ENCODE measurements at regions of chr4 and their contacts with region 1.

Region 1: DNA sequence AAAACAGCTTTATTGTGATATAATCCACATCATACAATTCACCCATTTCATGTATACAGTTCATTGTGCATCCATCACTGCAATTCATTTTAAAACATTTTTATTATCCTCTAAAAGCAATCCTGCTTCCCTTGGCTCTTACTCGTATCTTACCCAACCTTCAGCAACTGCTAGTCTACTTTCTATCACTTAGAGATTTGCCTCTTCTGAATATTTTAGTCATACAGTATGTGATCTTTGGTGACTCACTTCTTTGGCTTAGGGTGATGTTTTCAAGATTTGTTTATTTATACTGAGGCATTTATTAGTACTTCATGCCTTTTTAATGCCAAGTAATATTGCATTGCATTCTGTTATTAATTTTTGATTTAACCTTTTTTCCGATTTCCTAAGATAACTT is 15.0 kb upstream of the MSMO1 start:
- DNase-seq: no peak
- CTCF ChIP-seq: no peak

Region 2: DNA sequence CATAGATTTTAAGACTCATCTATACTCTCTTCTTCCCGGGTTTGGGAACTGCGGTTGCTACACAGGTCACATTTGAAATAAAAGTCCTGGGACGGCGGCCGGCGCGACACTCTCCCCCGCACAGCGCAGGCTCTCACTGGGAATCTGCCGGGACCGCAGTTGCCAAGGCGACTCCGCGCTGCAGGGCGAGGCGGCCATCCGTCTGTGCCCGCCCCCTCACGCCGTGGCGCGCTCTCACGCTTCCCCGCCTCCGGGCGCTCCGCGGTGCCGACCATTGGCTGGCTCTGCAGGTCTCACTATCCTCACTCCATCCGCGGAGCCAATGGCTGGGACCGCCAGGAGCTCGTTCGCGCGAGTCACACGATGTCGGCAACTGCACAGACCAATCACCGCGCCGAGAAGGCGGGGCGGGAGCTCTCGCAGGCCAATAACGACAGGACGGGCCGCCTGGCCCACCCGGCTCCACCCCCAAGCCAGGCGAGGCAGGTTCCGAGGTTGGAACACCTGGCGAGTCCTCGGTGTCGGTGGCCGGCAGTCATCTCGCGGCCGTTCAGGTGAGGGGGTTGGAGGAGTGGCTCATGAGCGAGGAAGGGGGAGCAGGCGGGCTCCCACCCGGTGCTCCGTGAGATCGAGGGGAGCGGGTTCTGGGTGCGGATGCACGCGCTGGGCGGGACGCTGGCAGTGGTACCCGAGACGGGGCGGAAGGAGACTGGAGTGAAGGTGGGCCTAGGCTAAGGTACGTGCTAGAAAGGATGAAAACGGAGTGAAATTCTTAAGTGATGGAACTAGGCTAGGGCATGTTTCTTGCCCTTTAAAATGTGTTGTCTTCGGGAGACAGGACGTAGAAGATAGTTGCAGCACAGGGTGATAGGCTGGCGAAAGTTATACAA is 14.9 kb after region 1 on chr4 and contains the start of gene MSMO1:
- CTCF ChIA-PET with region 1: interaction called, 10 read pairs
- POLR2A ChIA-PET with region 1: interaction called, 3 read pairs
- DNase-seq: peak; percentile 96
- CTCF ChIP-seq: no peak

Measured in GM10248 (cell line).